ENCODE measurements at regions of chr11 and their contacts with region 1.

Region 1: DNA sequence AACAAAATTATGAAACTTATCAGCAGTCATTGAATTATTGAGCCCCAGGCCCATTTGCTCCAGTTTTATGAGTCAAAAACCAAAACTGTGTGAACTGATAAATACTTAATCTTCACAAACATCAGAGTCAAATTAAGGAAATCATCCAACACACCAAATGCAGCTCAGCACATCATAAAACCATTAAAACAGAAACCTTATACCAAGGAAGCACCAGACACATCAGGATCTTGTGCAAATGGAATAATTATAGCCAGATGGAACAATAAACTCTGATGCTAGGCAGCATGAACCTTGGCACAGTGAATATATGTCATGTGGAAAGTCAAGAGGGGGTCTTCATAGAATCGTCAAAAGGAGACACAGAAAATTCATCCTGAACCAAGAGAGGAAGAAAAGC is 410.7 kb upstream of the API5 start:
- DNase-seq: no peak
- ATAC-seq: no peak
- H3K4me3 ChIP-seq: no peak overlapping the region
- H3K4me3 Mint-ChIP-seq: no peak overlapping the region
- H3K27ac ChIP-seq: no peak overlapping the region
- H3K27ac Mint-ChIP-seq: no peak overlapping the region
- H3K4me1 ChIP-seq: no peaks in the 10 kb centered on the region
- H3K4me1 Mint-ChIP-seq: no peaks in the 10 kb centered on the region
- H3K27me3 ChIP-seq: no peaks in the 10 kb centered on the region
- H3K27me3 Mint-ChIP-seq: no peaks in the 10 kb centered on the region
- CTCF ChIP-seq: no peak

Region 2: DNA sequence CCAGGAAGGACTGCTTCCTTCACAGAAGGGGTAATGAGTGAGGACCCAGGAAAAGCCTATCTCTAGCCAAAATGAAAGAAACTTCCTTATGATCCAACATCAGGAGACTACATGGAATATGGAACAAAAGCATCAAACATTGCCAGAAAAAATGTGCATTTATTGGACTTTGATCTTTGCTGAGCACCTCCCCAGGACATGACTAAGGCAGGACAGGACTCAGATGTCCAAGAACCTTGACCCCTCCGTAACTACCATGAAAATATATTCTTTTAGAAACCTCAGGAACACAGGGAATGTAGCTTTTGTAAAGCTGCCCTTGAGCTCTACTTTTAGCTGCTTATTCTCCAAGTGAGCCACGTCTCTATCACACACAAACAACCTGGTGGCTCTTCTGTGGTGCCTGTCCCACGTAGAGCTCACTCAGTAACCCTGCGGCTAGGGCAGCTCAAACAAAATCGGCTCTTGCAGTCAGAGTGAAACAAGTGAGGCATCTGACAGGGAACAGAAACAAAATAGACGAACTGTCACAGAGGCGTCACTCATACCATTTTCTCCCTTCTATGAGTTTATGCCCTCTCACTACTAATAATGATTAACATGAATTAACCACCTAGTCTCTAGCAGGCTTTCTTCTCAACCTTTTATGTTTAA is 60.8 kb before region 1 on chr11:
- CTCF ChIA-PET with region 1: no interaction called
- POLR2A ChIA-PET with region 1: no interaction called
- intact Hi-C with region 1: loop called (anchors 10 kb)
- DNase-seq: no peak
- ATAC-seq: no peak
- H3K4me3 ChIP-seq: no peak overlapping the region
- H3K4me3 Mint-ChIP-seq: no peak overlapping the region
- H3K27ac ChIP-seq: no peak overlapping the region
- H3K27ac Mint-ChIP-seq: no peak overlapping the region
- H3K4me1 ChIP-seq: no peaks in the 10 kb centered on the region
- H3K4me1 Mint-ChIP-seq: no peaks in the 10 kb centered on the region
- H3K27me3 ChIP-seq: no peaks in the 10 kb centered on the region
- H3K27me3 Mint-ChIP-seq: no peaks in the 10 kb centered on the region
- CTCF ChIP-seq: no peak

Region 3: GRCh38 chr11:42979533-42979932 is 78.4 kb after region 1 on chr11:
- CTCF ChIA-PET with region 1: no interaction called
- POLR2A ChIA-PET with region 1: no interaction called
- intact Hi-C with region 1: no loop called
- DNase-seq: no peak
- ATAC-seq: no peak
- H3K4me3 ChIP-seq: no peak overlapping the region
- H3K4me3 Mint-ChIP-seq: no peak overlapping the region
- H3K27ac ChIP-seq: no peak overlapping the region
- H3K27ac Mint-ChIP-seq: no peak overlapping the region
- H3K4me1 ChIP-seq: no peaks in the 10 kb centered on the region
- H3K4me1 Mint-ChIP-seq: no peaks in the 10 kb centered on the region
- H3K27me3 ChIP-seq: no peaks in the 10 kb centered on the region
- H3K27me3 Mint-ChIP-seq: no peaks in the 10 kb centered on the region
- CTCF ChIP-seq: no peak

Region 4: DNA sequence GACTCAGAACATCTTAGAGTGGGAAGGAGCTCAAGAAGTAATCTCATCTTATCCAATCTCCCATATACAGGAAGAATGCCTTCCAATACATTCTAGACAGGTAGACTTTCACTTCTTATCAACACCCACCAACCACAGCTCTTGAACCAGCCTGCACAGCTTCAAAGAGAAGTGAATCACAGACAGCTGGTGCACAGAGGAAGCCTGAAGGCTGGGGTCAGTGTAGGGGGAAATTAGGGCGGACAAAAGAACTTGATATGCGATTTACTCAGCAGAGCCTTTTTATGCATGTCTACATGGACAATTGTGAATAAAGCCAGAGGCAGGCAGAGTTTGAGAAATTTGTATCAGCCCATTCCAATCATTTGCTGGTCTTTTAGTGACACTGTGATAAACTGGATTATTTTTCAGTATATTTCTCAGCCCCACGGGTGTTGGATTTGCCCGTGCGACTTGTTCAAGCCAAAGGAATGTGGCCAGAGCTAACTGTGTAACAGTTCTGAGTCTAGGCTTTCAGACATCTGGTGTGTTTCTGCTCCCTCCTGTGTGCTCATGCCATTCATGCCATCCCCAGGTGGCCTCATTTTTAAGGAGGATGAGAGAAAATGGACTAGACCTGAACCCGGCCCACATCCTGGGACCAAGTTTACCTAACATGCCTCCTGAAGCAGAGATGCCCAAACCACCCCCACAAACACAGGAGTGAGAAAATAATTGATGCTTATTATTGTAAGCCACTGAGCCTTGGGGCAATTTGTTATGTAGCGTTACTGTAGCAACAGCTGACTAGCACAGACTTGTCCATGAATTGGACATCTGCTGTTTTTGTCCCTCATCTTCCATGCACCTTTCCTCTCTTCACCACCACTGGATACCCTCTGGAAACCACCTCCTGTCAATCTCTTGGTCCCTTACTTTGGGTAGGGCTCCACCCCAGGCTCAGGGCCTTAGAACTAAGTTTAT is 641.9 kb after region 1 on chr11:
- CTCF ChIA-PET with region 1: no interaction called
- POLR2A ChIA-PET with region 1: no interaction called
- intact Hi-C with region 1: no loop called
- DNase-seq: no peak
- ATAC-seq: no peak
- H3K4me3 ChIP-seq: no peak overlapping the region
- H3K4me3 Mint-ChIP-seq: no peak overlapping the region
- H3K27ac ChIP-seq: no peak overlapping the region
- H3K27ac Mint-ChIP-seq: no peak overlapping the region
- H3K4me1 ChIP-seq: peaks cover 0 to 4% of the 10 kb centered on the region in 2 donors
- H3K4me1 Mint-ChIP-seq: peaks cover 2% of the 10 kb centered on the region
- H3K27me3 ChIP-seq: peaks cover 0 to 36% (median 9%) of the 10 kb centered on the region in 4 experiments
- H3K27me3 Mint-ChIP-seq: peaks cover 58% of the 10 kb centered on the region
- CTCF ChIP-seq: no peak